ENCODE measurements at regions of chr9 and their contacts with region 1.

Region 1: GRCh38 chr9:34869390-34869789 is 88.7 kb upstream of the PHF24 start:
- DNase-seq: peak in 1 of 4 experiments; percentile 14
- ATAC-seq: no peak
- H3K4me3 ChIP-seq: no peak overlapping the region
- H3K27ac ChIP-seq: no peak overlapping the region
- H3K4me1 ChIP-seq: no peaks in the 10 kb centered on the region
- H3K27me3 ChIP-seq: no peaks in the 10 kb centered on the region
- CTCF ChIP-seq: peak in 1 of 3 experiments; percentile 44; a peak in 2 of 6 replicates
- EP300 ChIP-seq: no peak
- POLR2A ChIP-seq: no peak
- RAD21 ChIP-seq: peak in 1 of 2 experiments; percentile 29; a peak in 1 of 4 replicates

Region 2: GRCh38 chr9:34759432-34760134 is 109.8 kb before region 1 on chr9:
- CTCF ChIA-PET with region 1: no interaction called
- POLR2A ChIA-PET with region 1: no interaction called
- in situ Hi-C with region 1: no loop called
- intact Hi-C with region 1: loop called (anchors 5 kb)
- DNase-seq: no peak
- ATAC-seq: no peak
- H3K4me3 ChIP-seq: no peak overlapping the region
- H3K27ac ChIP-seq: no peak overlapping the region
- H3K4me1 ChIP-seq: peaks cover 0 to 4% of the 10 kb centered on the region in 2 experiments; a peak in 1 of 5 replicates
- H3K27me3 ChIP-seq: peaks cover 0 to 19% of the 10 kb centered on the region in 2 experiments; a peak in 1 of 5 replicates
- CTCF ChIP-seq: no peak
- EP300 ChIP-seq: no peak
- POLR2A ChIP-seq: no peak
- RAD21 ChIP-seq: no peak

Region 3: GRCh38 chr9:35658137-35658893 is 788.9 kb after region 1 on chr9 and contains the start of gene CCDC107:
- CTCF ChIA-PET with region 1: no interaction called
- POLR2A ChIA-PET with region 1: no interaction called
- in situ Hi-C with region 1: no loop called
- intact Hi-C with region 1: no loop called
- DNase-seq: peak; percentile 78 to 97 (median 96)
- ATAC-seq: peak; percentile 81
- H3K4me3 ChIP-seq: peak within 1 kb of the TSS; percentile 89
- H3K27ac ChIP-seq: peak within 1 kb of the TSS; percentile 98
- H3K4me1 ChIP-seq: peaks cover 14 to 27% of the 10 kb centered on the region in 2 experiments; a peak in 4 of 5 replicates
- H3K27me3 ChIP-seq: no peaks in the 10 kb centered on the region
- CTCF ChIP-seq: peak; percentile 47 to 71 (median 65)
- EP300 ChIP-seq: 0 out of 2 replicates have a peak, but pooled peaks have one; percentile 5
- POLR2A ChIP-seq: peak; percentile 70
- RAD21 ChIP-seq: peak; percentile 31 to 33; a peak in 3 of 4 replicates
- polyA plus RNA-seq, gene CCDC107: 0.35 TPM in 1 of 2 experiments, not detected in the other